MCF 10A (cell line): ENCODE measurements at regions of chr6 and their contacts with region 1.

Region 1: DNA sequence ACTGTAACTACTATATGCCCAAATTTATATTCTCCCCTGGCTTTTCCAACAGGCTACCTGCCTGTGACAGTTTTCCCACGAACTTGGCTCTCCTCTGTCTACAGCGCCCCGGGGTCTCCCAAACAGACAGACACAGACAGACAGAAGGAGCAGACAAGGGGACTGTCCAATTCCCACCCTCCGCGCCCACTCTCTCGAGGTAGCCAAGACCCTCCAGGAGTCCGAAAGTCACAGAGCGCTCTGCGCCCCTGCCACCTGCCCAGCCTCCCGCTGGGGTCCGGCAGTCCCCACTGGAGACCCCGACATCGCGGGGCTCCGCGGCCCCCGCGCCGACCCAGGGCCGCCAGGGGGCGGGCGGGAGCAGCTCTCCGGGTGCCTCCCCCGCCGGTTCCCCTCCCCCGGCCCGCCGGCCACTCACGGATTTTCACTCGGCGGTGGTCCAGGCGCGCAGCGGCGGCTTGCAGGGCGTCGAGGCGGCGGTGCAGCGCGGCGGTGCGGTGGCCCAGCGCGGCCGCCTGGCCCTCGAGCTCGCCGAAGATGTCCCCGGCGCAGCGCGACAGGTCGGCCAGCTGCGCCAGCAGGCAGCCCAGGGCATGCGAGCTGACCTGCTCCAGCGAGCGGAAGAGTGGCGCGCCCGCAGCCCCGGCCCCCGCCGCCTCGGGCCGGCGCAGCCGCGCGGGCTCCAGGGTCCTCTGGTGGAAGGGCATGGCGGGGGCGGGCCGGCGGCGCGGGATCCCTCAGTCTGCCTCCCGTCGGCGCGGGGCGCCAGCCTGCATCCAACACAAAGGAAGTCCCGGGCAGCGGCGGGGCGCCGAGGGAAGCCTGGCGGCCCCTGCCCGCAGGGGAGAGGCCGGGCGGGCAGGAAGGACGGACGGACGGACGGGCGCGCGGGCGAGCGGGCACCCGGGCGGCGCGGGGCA is 81.3 kb upstream of the CCDC28A start:
- DNase-seq: peak; percentile 57
- H3K4me3 Mint-ChIP-seq: peak overlapping the region; percentile 90
- H3K27ac Mint-ChIP-seq: peak overlapping the region; percentile 87
- H3K4me1 Mint-ChIP-seq: peaks cover 11% of the 10 kb centered on the region
- H3K27me3 Mint-ChIP-seq: no peaks in the 10 kb centered on the region
- CTCF ChIP-seq: peak; percentile 92

Region 2: GRCh38 chr6:138588805-138589434 is 103.4 kb before region 1 on chr6:
- CTCF ChIA-PET with region 1: interaction called, 29 read pairs
- POLR2A ChIA-PET with region 1: interaction called, 17 read pairs
- intact Hi-C with region 1: loop called (anchors 1 kb)
- DNase-seq: peak; percentile 84
- H3K4me3 Mint-ChIP-seq: no peak overlapping the region
- H3K27ac Mint-ChIP-seq: no peak overlapping the region
- H3K4me1 Mint-ChIP-seq: peaks cover 31% of the 10 kb centered on the region
- H3K27me3 Mint-ChIP-seq: no peaks in the 10 kb centered on the region
- CTCF ChIP-seq: peak; percentile 82

Region 3: DNA sequence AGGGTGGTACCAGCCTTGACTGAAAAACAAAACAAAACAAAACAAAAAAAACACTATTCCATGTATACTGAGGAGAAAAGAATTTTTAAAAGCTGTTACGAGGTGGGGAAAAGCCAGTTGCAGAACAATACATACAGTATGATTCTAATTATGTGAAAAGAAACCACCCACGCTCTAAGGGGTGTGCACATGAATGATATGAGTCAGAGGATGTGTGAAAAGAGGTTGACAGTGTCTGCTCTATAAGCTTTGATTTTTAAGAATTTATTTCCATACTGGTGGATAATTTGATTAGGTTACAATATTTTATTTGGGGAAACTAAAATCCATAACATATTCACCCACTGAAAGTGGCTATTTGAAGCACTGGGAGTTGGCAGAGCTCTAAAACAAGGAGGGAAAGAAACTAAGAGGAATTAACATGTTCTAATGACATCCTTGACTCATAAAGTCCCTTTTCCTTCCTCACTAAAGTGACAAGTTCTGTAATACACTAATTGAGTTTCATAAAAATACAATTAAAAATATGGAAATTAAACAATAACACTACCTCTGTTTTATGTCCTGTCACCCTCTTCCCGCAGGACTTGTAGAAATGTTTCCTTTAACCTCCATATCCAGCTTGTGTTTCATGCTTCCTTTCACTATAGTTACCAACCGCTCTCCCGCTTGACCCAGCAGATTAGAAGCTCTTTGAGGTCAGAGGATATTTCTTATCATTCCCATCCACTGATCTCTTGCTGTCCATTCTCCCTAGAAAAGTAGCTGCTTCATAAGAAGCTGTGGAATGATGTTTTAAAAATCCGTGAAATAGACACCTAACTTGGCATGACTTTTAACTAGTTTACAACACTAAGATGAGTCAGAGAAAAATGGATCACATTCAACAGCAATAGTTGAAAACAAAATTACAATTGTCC is 37.3 kb before region 1 on chr6:
- CTCF ChIA-PET with region 1: interaction called, 20 read pairs
- POLR2A ChIA-PET with region 1: interaction called, 103 read pairs
- intact Hi-C with region 1: loop called (anchors 2 kb)
- DNase-seq: peak; percentile 79
- H3K4me3 Mint-ChIP-seq: peak overlapping the region; percentile 64
- H3K27ac Mint-ChIP-seq: peak overlapping the region; percentile 83
- H3K4me1 Mint-ChIP-seq: peaks cover 44% of the 10 kb centered on the region
- H3K27me3 Mint-ChIP-seq: no peaks in the 10 kb centered on the region
- CTCF ChIP-seq: no peak

Region 4: GRCh38 chr6:138765896-138766655 is 73.8 kb after region 1 on chr6:
- CTCF ChIA-PET with region 1: interaction called, 9 read pairs
- POLR2A ChIA-PET with region 1: interaction called, 8 read pairs
- intact Hi-C with region 1: loop called (anchors 2 kb)
- DNase-seq: peak; percentile 47
- H3K4me3 Mint-ChIP-seq: no peak overlapping the region
- H3K27ac Mint-ChIP-seq: no peak overlapping the region
- H3K4me1 Mint-ChIP-seq: no peaks in the 10 kb centered on the region
- H3K27me3 Mint-ChIP-seq: no peaks in the 10 kb centered on the region
- CTCF ChIP-seq: peak; percentile 43